CD4-positive, alpha-beta memory T cell (primary cell): ENCODE measurements at regions of chr15 and their contacts with region 1.

Region 1: GRCh38 chr15:89171136-89172072 is 50.0 kb downstream of the RLBP1 start:
- DNase-seq: peak in 2 of 5 donors; percentile 22 to 24
- H3K4me3 ChIP-seq: no peak overlapping the region
- H3K4me3 Mint-ChIP-seq: no peak overlapping the region
- H3K27ac ChIP-seq: no peak overlapping the region
- H3K27ac Mint-ChIP-seq: no peak overlapping the region
- H3K4me1 ChIP-seq: peaks cover 12% of the 10 kb centered on the region
- H3K4me1 Mint-ChIP-seq: peaks cover 4 to 10% (median 6%) of the 10 kb centered on the region in 4 donors
- H3K27me3 ChIP-seq: no peaks in the 10 kb centered on the region
- H3K27me3 Mint-ChIP-seq: no peaks in the 10 kb centered on the region

Region 2: DNA sequence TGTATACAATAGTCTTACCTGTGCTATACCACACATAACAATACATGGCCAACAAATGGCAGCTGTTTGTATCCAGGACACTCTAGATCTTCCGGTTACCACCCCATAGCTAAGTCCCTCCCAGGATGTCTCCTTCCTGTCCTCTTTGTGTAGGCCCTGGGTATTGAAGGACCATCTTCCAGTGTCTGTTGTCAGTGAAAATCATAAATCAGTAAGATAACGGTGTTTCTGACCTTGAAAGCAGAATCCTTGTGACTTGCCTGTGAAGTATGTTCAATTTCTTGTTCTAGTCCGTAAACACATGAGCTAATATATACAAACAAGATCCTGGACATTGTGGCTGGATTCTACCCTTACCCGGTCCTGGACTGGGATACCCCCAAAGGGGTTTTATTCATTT is 1377.7 kb before region 1 on chr15:
- CTCF ChIA-PET with region 1: no interaction called
- POLR2A ChIA-PET with region 1: no interaction called
- intact Hi-C with region 1: no loop called
- DNase-seq: no peak
- H3K4me3 ChIP-seq: no peak overlapping the region
- H3K4me3 Mint-ChIP-seq: no peak overlapping the region
- H3K27ac ChIP-seq: no peak overlapping the region
- H3K27ac Mint-ChIP-seq: no peak overlapping the region
- H3K4me1 ChIP-seq: no peaks in the 10 kb centered on the region
- H3K4me1 Mint-ChIP-seq: no peaks in the 10 kb centered on the region
- H3K27me3 ChIP-seq: no peaks in the 10 kb centered on the region
- H3K27me3 Mint-ChIP-seq: peaks cover 0 to 2% of the 10 kb centered on the region in 2 donors

Region 3: DNA sequence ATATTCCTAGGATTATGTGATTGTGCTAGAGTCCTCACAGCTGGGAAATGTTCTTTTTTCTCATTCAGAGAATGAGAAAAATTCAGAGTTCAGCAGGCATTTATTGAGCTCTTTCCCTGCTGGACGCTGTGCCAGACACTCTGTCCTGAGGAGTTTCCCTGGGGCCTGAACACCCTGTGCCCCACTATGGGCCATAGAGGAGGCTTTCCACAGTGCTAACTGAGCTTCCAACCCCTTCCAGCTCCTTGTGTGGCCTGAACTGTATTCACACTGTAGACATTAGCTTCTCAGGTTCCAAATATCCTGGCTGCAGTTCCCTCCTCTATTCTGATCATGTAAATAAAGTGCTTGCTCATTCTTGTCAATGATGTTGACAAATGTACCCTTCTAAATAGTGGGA is 73.1 kb before region 1 on chr15:
- CTCF ChIA-PET with region 1: no interaction called
- POLR2A ChIA-PET with region 1: no interaction called
- intact Hi-C with region 1: no loop called
- DNase-seq: no peak
- H3K4me3 ChIP-seq: no peak overlapping the region
- H3K4me3 Mint-ChIP-seq: no peak overlapping the region
- H3K27ac ChIP-seq: no peak overlapping the region
- H3K27ac Mint-ChIP-seq: no peak overlapping the region
- H3K4me1 ChIP-seq: peaks cover 6% of the 10 kb centered on the region
- H3K4me1 Mint-ChIP-seq: peaks cover 17 to 32% (median 22%) of the 10 kb centered on the region in 4 donors
- H3K27me3 ChIP-seq: no peaks in the 10 kb centered on the region
- H3K27me3 Mint-ChIP-seq: no peaks in the 10 kb centered on the region

Region 4: GRCh38 chr15:89157918-89158564 is 13.4 kb before region 1 on chr15:
- CTCF ChIA-PET with region 1: interaction called, 18 read pairs
- POLR2A ChIA-PET with region 1: no interaction called
- intact Hi-C with region 1: no loop called
- DNase-seq: no peak
- H3K4me3 ChIP-seq: no peak overlapping the region
- H3K4me3 Mint-ChIP-seq: no peak overlapping the region
- H3K27ac ChIP-seq: no peak overlapping the region
- H3K27ac Mint-ChIP-seq: peak overlapping the region in 2 of 7 donors; percentile 76 to 82
- H3K4me1 ChIP-seq: no peaks in the 10 kb centered on the region
- H3K4me1 Mint-ChIP-seq: peaks cover 0 to 6% (median 4%) of the 10 kb centered on the region in 4 donors
- H3K27me3 ChIP-seq: no peaks in the 10 kb centered on the region
- H3K27me3 Mint-ChIP-seq: no peaks in the 10 kb centered on the region